Sigmoid colon (tissue), 7 donors: ENCODE measurements at regions of chr14 and their contacts with region 1.

Region 1: DNA sequence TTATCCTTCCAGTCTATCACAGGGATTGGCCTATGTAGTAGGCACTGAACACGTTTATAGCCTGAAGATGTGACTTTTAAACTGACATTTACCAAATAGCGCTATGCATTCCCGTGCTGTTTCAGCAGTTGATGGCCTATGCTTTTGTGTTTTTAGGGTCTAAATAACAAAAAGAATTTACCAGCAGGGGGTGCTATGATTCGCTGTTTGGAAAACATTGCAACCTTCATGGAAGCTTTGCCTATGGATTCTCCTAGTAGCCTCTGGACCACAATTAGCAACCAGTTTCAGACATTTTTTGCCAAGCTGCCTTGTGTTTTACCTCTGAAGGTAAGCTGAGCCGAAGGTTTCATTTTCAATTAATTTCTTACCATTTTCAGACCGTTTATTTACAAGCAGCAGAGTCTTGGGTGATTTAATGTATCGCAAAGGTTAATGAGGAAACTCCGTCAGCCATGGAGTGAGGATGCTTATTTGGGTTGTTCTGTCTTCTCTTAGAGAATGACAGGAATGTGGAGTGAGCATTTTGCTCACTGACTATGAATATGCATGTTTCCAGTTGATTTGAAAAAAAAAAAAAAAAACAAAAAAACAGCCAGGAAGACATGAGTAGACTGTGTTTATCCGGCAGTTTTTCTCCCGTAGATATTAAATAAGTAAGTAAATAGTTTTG is 133.1 kb downstream of the PRIMA1 start:
- DNase-seq: no peak
- H3K4me3 ChIP-seq: no peak overlapping the region
- H3K27ac ChIP-seq: no peak overlapping the region
- H3K4me1 ChIP-seq: no peaks in the 10 kb centered on the region
- H3K27me3 ChIP-seq: no peaks in the 10 kb centered on the region
- CTCF ChIP-seq: peak; percentile 37 to 68 (median 48)
- EP300 ChIP-seq: no peak
- POLR2A ChIP-seq: no peak

Region 2: DNA sequence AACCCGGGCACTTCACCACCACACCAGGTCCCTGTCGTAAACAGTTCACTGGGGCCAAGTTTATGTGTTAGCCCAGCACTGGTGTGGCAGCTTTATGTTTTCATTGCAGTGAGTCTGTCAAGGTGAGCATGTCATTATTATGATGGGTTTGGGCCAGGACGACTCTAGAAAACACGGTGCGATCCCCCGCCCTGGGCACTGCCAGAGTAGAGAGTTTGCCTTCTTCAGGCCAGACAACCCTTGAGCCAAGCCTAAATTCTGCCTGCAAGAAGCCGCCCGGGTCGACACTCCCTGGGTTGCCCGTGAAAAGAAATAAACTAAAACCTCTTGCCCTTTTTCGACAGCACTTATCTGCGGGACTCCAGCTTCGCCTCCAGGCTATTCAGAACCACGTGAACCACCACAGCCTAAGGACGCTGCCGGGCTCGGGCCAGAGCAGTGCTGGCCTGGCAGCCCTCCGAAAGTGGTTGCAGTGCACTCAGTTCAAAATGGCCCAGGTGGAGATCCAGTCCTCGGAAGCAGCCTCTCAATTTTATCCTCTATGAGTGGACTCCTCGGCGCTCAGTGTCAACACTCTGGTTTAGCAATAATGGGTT is 51.2 kb after region 1 on chr14:
- intact Hi-C with region 1: no loop called
- DNase-seq: peak; percentile 36
- H3K4me3 ChIP-seq: no peak overlapping the region
- H3K27ac ChIP-seq: no peak overlapping the region
- H3K4me1 ChIP-seq: no peaks in the 10 kb centered on the region
- H3K27me3 ChIP-seq: no peaks in the 10 kb centered on the region
- CTCF ChIP-seq: no peak
- EP300 ChIP-seq: no peak
- POLR2A ChIP-seq: no peak

Region 3: DNA sequence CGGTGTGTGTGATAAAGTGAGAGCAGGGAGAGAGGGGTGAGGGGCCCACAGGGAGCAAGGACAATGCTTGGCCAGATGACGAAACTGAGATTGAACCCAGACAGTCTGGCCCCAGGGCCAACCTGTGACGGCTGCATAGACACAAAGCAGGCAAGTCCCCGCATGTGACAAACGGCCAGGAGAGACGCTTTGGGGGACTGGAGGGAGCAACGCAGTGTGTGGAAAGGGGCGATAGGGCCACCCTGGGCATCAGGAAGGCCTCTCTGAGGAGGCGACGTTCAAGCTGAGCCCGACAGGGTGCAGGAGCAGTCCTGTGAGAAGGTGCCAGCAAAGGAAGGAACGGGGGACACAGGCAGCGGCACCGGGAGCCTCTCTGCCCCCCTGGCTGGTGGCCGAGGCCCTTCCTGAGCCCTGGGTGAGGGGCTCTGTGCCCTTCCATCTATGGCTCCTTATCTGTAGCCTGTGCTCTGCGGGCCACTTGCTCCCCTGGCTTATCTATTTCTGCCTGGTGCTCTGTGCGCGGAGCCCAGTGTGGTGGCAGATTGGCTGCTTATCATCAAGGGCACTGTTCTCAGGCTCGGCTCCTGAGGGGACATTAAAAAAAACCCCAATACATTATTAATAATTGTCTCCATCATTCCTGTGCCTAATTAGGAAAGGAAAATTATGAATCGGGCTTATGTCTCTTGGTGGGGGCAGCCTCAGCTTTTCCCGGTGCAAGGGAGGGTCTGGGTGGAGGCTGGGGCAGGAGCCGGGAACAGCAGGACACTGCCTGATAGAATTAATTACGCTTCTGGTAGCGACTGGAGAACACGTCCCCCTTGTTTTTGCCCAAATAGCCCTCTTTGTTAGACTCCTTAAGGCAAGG is 93.2 kb after region 1 on chr14:
- intact Hi-C with region 1: loop called (anchors 5 kb)
- DNase-seq: peak; percentile 49
- H3K4me3 ChIP-seq: no peak overlapping the region
- H3K27ac ChIP-seq: peak overlapping the region; percentile 41 to 61 (median 48)
- H3K4me1 ChIP-seq: peaks cover 0 to 32% (median 13%) of the 10 kb centered on the region in 4 donors
- H3K27me3 ChIP-seq: no peaks in the 10 kb centered on the region
- CTCF ChIP-seq: no peak
- EP300 ChIP-seq: peak in 1 of 4 donors; percentile 17
- POLR2A ChIP-seq: no peak

Region 4: GRCh38 chr14:93788543-93789227 is 133.5 kb after region 1 on chr14:
- intact Hi-C with region 1: loop called (anchors 1 kb)
- DNase-seq: peak; percentile 88
- H3K4me3 ChIP-seq: peak overlapping the region; percentile 62 to 80 (median 70)
- H3K27ac ChIP-seq: peak overlapping the region; percentile 76 to 90 (median 90)
- H3K4me1 ChIP-seq: peaks cover 0 to 56% (median 37%) of the 10 kb centered on the region in 4 donors
- H3K27me3 ChIP-seq: no peaks in the 10 kb centered on the region
- CTCF ChIP-seq: peak; percentile 15 to 64 (median 53)
- EP300 ChIP-seq: no peak
- POLR2A ChIP-seq: no peak

Region 5: DNA sequence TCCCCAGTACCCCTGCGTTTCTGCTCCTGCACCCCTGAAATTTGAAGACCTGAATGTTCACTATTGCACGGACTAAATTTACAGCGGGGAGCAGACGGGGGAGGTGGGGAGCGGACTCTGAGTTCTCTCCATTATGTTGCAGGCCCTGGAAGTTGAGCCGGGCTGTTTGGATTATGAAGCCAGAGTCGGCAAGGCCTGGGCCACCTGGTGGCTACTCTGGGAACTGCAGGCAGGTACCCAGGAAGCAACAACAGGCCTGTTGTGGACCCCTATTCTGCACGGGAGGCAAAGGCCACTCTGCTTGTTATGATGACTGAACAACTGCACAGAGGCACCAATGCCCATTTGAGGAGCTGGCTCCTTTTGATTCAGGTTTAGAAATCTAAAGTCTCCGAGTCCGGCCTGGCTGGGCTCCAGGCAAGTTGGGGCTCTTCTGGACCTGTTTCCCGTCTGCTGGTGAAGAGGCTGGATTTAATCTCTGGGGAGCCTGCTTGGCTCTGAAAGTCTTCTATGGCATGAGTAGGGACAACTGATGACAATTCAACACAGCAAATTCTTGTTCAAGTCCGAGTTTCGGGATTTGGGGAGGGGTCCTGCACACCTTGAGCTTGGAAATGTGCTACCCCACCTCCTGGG is 237.8 kb after region 1 on chr14:
- intact Hi-C with region 1: loop called (anchors 1 kb)
- DNase-seq: peak; percentile 90
- H3K4me3 ChIP-seq: peak overlapping the region in 1 of 4 donors; percentile 3
- H3K27ac ChIP-seq: peak overlapping the region in 3 of 4 donors; percentile 14 to 29 (median 25)
- H3K4me1 ChIP-seq: peaks cover 0 to 16% (median 7%) of the 10 kb centered on the region in 4 donors
- H3K27me3 ChIP-seq: no peaks in the 10 kb centered on the region
- CTCF ChIP-seq: peak; percentile 91 to 100 (median 96)
- EP300 ChIP-seq: no peak
- POLR2A ChIP-seq: no peak

Region 6: GRCh38 chr14:93906341-93907329 is 251.4 kb after region 1 on chr14:
- intact Hi-C with region 1: loop called (anchors 5 kb)
- DNase-seq: no peak
- H3K4me3 ChIP-seq: no peak overlapping the region
- H3K27ac ChIP-seq: no peak overlapping the region
- H3K4me1 ChIP-seq: peaks cover 0 to 4% (median 0%) of the 10 kb centered on the region in 4 donors
- H3K27me3 ChIP-seq: peaks cover 0 to 11% (median 0%) of the 10 kb centered on the region in 3 donors
- CTCF ChIP-seq: peak in 3 of 4 experiments; percentile 32 to 60 (median 54)
- EP300 ChIP-seq: no peak
- POLR2A ChIP-seq: no peak